GM10248 (cell line): ENCODE measurements at regions of chr12 and their contacts with region 1.

Region 1: DNA sequence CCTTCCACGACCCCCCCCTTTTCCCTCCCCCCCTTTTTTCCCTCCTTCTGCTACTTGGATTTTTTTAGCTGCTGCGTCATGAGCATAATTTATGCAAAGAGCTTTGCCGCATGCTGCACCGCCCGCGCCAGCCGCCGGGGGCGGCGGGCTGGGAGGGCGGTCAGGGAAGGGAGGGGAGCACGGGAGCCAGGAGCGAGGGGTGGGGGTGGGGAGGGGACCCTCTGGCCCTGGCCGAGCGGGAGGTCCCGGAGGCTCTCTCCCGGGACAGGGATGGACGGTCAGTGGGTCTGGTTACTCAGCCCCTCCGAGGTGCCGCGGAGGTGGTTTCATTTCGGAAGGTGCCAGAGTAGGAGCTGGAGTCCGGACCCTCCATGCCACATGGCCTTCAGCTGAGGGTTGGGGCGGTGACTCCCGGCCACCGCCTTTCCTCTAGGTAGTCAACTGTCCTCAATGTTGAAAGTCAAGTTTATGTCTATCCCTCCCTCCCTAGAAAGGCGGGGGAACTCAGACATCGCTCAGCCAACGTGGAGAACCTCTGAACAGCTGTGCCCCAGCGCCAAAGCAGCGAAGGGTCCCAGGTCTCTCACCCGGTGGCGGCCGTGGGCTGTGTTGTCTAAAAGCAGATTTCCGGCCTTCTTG is at the start of gene POU6F1:
- DNase-seq: peak; percentile 86
- CTCF ChIP-seq: peak; percentile 19

Region 2: GRCh38 chr12:51103977-51104376 is 114.1 kb before region 1 on chr12:
- CTCF ChIA-PET with region 1: no interaction called
- POLR2A ChIA-PET with region 1: interaction called, 11 read pairs
- DNase-seq: no peak
- CTCF ChIP-seq: no peak

Region 3: DNA sequence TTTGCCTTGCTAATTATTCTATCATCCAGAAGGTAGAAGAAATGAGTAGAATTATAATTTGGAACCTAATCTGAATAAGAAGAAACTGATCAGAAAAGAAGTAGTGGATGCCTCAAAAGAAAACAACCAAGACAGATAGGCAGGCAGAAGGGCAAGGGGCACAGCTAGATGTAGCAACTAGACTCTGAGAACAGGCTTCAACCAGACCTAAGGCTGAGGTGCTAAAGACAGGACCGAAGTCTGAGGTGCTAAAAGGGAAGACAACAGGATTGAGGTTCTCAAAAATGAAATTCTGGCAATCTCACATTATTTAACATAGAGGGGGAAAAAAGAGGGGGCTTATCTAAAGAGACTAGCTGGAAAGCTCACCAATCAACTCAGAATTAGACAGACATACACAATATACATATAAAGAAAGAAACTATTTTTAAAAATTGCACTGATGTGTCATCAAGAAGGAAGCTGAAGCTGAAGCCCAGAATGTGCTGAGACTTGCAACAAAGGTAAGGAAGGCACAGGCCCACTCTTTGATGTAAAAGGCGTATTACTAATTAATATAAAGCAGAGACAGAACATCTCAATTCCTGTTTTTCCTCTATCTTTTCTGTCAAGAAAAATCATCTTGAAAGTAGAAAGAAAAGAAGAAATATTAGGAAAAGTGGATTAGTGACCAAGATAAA is 90.9 kb before region 1 on chr12:
- CTCF ChIA-PET with region 1: no interaction called
- POLR2A ChIA-PET with region 1: no interaction called
- DNase-seq: no peak
- CTCF ChIP-seq: no peak

Region 4: GRCh38 chr12:51205350-51205749 is 12.7 kb before region 1 on chr12:
- CTCF ChIA-PET with region 1: interaction called, 11 read pairs
- POLR2A ChIA-PET with region 1: interaction called, 8 read pairs
- DNase-seq: no peak
- CTCF ChIP-seq: no peak

Region 5: DNA sequence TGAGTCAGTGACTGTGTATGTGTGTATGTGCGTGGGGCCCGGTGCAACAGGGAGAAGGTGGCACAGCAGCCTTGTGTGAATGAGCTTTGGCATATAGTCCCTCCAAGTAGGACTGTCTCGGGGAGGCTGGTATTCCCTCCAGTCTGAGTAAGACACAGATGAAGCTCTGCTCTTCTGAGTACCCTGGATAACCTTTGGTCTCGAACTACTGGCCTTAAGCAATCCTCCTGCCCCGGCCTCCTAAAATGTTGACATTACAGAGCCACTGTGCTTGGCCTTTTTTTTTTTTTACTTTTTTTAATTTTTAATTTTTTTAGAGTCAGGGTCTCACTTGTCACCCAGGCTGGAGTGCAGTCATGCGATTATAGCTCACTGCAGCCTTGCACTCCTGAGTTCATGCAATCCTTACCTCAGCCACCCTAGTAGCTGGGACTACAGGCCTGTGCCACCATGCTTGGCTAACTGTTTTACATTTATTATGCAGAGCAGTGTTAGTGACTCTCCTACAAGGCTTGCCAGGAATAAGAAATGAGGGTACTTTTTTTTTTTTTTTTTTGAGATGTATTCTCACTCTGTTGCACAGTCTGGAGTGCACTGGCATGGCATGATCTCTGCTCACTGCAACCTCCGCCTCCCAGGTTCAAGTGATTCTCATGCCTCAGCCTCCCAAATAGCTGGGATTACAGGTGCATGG is 11.2 kb after region 1 on chr12:
- CTCF ChIA-PET with region 1: interaction called, 20 read pairs
- POLR2A ChIA-PET with region 1: no interaction called
- DNase-seq: no peak
- CTCF ChIP-seq: no peak

Region 6: DNA sequence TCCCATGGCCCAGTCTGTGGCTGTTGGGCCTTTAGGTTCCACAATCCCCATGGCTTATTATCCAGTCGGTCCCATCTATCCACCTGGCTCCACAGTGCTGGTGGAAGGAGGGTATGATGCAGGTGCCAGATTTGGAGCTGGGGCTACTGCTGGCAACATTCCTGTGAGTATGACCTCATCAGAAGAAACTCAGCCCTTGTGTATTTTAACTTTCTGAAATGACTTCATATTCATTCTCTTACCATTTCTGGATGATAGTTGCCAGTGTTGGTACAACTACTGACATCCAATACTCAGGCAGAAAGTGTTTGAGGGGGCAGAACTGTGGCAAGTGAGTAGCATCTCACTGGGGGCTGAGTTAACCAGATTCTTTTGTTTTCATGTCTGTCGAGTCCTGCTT is 22.9 kb after region 1 on chr12:
- CTCF ChIA-PET with region 1: interaction called, 4 read pairs
- POLR2A ChIA-PET with region 1: interaction called, 10 read pairs
- DNase-seq: no peak
- CTCF ChIP-seq: no peak

Region 7: GRCh38 chr12:51262758-51263177 is 44.7 kb after region 1 on chr12:
- CTCF ChIA-PET with region 1: no interaction called
- POLR2A ChIA-PET with region 1: no interaction called
- DNase-seq: no peak
- CTCF ChIP-seq: peak; percentile 16